ENCODE measurements at regions of chr10 and their contacts with region 1.

Region 1: DNA sequence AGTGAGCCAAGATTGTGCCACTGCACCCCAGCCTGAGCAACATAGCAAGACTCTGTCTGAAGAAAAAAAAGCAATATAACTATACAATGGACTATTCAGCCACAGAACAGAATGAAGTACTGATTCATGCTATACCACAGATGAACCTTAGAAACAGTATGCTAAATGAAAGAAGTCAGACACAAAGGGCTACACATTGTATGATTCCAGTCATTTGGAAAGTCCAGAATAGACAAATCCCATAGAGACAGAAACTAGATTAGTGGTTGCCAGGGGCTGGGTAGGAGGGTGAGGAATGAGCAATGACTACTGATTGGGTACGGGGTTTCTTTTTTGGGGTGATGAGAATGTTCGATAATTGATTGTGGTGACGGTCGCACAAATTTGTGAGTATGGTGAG is 9.6 kb upstream of the CFAP70 start:
- DNase-seq: no peak
- ATAC-seq: no peak
- H3K4me3 ChIP-seq: no peak overlapping the region
- H3K27ac ChIP-seq: no peak overlapping the region
- H3K4me1 ChIP-seq: no peaks in the 10 kb centered on the region
- H3K27me3 ChIP-seq: no peaks in the 10 kb centered on the region
- CTCF ChIP-seq: no peak

Region 2: GRCh38 chr10:72753760-72754231 is 614.4 kb before region 1 on chr10:
- CTCF ChIA-PET with region 1: no interaction called
- POLR2A ChIA-PET with region 1: no interaction called
- in situ Hi-C with region 1: no loop called
- intact Hi-C with region 1: no loop called
- DNase-seq: no peak
- ATAC-seq: no peak
- H3K4me3 ChIP-seq: no peak overlapping the region
- H3K27ac ChIP-seq: no peak overlapping the region
- H3K4me1 ChIP-seq: no peaks in the 10 kb centered on the region
- H3K27me3 ChIP-seq: no peaks in the 10 kb centered on the region
- CTCF ChIP-seq: no peak

Region 3: DNA sequence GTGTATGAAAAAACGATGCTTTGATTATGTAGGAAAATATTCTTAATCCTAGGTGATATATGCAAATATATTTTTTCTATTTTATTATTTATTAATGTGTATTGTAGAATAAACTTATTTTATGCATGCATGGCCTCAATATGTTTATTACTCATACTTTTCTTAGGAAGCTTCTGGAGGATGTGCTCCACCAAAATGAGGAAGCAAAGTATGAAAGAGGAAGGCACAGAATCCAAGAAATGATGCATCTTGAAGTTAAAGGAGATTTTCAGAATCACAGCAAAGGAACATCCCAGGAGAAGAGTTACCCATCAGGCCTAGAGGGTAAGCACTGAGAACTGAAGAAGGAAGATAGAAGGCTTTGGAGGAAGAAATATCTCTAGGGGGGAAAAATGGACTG is 80.8 kb before region 1 on chr10:
- CTCF ChIA-PET with region 1: interaction called, 11 read pairs
- POLR2A ChIA-PET with region 1: no interaction called
- in situ Hi-C with region 1: no loop called
- intact Hi-C with region 1: no loop called
- DNase-seq: no peak
- ATAC-seq: no peak
- H3K4me3 ChIP-seq: no peak overlapping the region
- H3K27ac ChIP-seq: no peak overlapping the region
- H3K4me1 ChIP-seq: no peaks in the 10 kb centered on the region
- H3K27me3 ChIP-seq: no peaks in the 10 kb centered on the region; the same call in 1 of the 2 replicates
- CTCF ChIP-seq: no peak

Region 4: GRCh38 chr10:73576178-73576889 is 208.1 kb after region 1 on chr10:
- CTCF ChIA-PET with region 1: no interaction called
- POLR2A ChIA-PET with region 1: interaction called, 13 read pairs
- in situ Hi-C with region 1: no loop called
- intact Hi-C with region 1: no loop called
- DNase-seq: no peak
- ATAC-seq: no peak
- H3K4me3 ChIP-seq: no peak overlapping the region
- H3K27ac ChIP-seq: peak overlapping the region; percentile 2; the same call in 1 of the 2 replicates
- H3K4me1 ChIP-seq: 0 out of 2 replicates have a peak, but pooled peaks cover 2% of the 10 kb centered on the region
- H3K27me3 ChIP-seq: no peaks in the 10 kb centered on the region
- CTCF ChIP-seq: no peak